ENCODE measurements at regions of chr1 and their contacts with region 1.

Region 1: DNA sequence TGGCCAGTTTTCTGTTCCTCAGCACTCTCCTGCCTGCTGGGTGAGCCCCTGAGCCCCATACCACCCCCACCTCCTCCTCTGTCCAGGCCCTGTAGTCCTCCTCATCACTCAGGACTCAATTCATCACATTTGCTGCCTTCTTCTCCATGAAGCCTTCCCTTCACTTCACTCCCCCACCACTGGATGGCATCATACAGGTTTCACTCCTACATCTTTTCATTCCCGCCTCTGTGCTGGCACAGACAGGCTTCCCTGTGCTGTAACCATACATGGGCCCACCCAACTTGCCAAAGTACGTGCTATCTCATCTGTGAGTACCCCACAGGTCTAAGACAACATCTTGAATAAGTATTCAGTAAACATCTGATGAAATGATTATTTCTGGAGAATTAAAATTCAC is 56.9 kb downstream of the SLC45A1 start:
- DNase-seq: peak in 1 of 2 donors; percentile 2
- H3K4me3 ChIP-seq: no peak overlapping the region
- H3K27ac ChIP-seq: peak overlapping the region; percentile 60 to 86 (median 85)
- H3K4me1 ChIP-seq: peaks cover 77 to 91% of the 10 kb centered on the region in 2 donors
- H3K27me3 ChIP-seq: no peaks in the 10 kb centered on the region
- CTCF ChIP-seq: peak in 1 of 6 experiments; percentile 25
- POLR2A ChIP-seq: no peak

Region 2: DNA sequence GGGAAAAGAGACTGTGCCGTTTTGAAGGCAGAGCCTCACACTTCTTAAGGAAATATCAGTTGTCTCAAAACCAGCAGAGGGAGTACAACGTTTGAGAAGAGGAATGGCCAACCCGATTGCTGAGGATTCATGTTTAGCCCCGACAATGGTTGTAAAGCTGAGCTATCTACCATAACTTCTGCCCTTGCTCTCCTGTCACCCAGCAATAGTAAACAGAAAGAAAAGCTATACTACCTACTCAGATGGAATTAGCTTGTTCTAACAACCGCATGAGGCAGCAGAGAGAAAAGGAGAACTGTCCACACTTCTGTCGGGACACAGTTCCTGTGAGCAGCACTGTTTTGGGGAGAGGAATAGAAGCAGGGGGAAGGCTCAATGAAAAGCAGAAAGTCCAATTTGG is 34.3 kb after region 1 on chr1:
- intact Hi-C with region 1: loop called (anchors 5 kb)
- DNase-seq: no peak
- H3K4me3 ChIP-seq: no peak overlapping the region
- H3K27ac ChIP-seq: peak overlapping the region; percentile 54 to 81 (median 80)
- H3K4me1 ChIP-seq: peaks cover 53 to 77% of the 10 kb centered on the region in 2 donors
- H3K27me3 ChIP-seq: no peaks in the 10 kb centered on the region
- CTCF ChIP-seq: peak in 4 of 6 experiments; percentile 42 to 58 (median 50)
- POLR2A ChIP-seq: no peak

Region 3: DNA sequence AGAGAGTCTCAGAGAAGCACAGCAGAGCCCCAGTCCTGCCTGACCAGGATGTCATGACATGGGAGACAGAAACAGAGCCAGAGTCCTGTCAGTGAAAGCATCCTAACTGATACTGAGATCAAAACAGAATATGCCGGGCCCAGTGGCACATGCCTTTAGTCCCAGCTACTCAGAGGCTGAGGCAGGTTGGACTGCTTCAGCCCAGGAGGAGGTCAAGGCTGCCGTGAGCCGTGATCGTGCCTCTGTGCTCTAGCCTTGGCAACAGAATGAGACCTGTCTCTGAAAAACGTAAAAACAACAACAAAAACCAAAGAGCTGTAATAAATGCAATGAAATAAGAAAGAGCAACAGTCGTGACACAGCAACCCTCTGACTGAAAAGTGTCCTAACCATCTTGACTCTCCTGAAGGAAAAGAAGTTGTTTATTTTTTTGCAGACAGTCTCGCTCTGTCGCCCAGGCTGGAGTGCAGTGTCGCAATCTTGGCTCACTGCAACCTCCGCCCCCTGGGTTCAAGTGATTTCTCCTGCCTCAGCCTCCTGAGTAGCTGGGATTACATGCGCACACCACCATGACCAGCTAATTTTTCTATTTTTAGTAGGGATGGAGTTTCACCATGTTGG is 132.3 kb after region 1 on chr1:
- intact Hi-C with region 1: no loop called
- DNase-seq: peak in 1 of 2 donors; percentile 48
- H3K4me3 ChIP-seq: no peak overlapping the region
- H3K27ac ChIP-seq: peak overlapping the region; percentile 30 to 65 (median 42)
- H3K4me1 ChIP-seq: peaks cover 25 to 27% of the 10 kb centered on the region in 2 donors
- H3K27me3 ChIP-seq: no peaks in the 10 kb centered on the region
- CTCF ChIP-seq: no peak
- POLR2A ChIP-seq: no peak

Measured in thyroid gland (tissue), 4 donors.